HEK293 (cell line): ENCODE measurements at regions of chr12 and their contacts with region 1.

Region 1: DNA sequence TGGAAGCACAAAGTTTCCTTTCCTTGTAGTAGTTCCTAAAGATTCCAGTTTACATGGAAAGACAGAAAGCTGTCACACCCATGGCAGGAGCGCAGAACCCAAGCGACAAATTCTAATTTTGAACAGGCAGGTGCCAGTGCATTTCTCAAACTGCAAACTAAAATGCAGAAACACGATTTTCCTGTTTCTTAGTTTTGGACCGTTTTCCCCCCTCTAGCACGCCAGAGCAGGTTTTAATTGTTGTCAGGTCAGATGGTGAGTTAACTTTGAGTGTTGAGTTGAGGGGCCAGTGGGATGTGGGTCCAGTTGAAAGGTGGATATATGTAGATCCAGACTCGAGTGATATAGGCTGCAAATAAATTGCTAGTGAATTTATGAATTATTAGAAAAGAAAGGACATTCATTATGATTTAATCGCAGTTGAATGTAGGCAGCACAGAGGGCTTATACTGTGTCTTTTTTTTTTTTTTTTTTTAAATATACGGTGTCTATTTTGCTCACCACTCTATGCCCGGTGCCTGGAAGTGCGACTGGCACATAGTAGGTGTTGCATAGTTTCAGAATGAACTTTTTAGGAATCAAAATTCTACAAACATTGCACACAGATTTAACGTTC is 909 bp upstream of the ETFBKMT start:
- H3K4me3 ChIP-seq: peak overlapping the region; percentile 69
- H3K27ac ChIP-seq: 0 out of 2 replicates have a peak overlapping the region, but pooled peaks have one; percentile 67
- H3K4me1 ChIP-seq: no peaks in the 10 kb centered on the region
- CTCF ChIP-seq: no peak

Region 2: GRCh38 chr12:31702047-31702446 is 43.5 kb after region 1 on chr12:
- CTCF ChIA-PET with region 1: interaction called, 12 read pairs
- POLR2A ChIA-PET with region 1: no interaction called
- H3K4me3 ChIP-seq: no peak overlapping the region
- H3K27ac ChIP-seq: no peak overlapping the region
- H3K4me1 ChIP-seq: no peaks in the 10 kb centered on the region
- CTCF ChIP-seq: no peak

Region 3: DNA sequence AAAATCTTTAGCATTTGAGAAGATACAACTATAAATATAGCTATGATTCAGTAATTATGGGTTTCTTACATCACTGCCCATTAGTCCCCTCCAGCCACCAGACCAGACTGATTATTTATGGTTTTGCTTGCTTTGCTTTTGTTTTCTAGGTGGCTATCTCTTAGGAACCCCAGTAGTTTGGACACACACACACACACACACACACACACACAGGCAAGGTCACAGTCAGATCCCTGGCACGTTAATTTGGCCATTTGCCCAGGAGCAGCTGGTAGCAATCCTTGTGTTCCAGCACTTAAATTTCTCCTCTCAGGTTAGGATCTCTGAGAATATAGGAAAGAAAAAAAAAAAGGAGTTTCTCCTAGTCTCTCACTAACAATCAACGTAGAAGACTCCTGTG is 210.4 kb after region 1 on chr12:
- CTCF ChIA-PET with region 1: no interaction called
- POLR2A ChIA-PET with region 1: no interaction called
- H3K4me3 ChIP-seq: no peak overlapping the region
- H3K27ac ChIP-seq: no peak overlapping the region
- H3K4me1 ChIP-seq: no peaks in the 10 kb centered on the region
- CTCF ChIP-seq: no peak